ENCODE measurements at regions of chr14 and their contacts with region 1.

Region 1: DNA sequence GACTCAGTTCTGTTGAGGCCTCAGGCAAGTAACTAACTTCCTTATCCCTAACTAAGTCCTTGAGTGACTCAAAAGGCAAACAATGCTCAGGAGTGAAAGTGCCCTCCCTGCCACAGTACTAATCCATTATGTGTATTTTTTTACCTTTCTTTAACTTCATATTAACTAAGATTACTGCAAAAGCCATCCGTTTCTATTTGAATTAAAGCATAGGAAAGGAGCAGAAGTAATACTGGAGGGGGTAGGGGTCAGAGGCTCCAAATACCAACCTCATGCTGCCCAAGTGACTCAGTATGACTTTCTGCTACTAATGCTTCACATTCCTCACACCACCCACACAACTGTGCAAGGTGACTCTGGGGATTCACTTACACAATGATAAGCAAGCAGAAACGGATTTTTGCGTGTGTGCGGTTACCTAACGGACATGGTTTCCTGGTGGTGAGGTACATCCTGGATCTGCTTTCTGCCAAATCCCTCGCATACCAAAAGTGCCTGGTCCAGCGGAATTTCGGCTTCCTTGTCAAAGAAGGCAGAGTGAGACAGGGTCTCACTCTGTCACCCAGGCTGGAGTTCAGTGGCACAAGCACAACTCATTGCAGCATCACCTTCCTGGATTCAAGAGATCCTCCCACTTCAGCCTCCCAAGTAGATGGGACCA is 25.1 kb downstream of the MOK start:
- DNase-seq: peak; percentile 98
- H3K4me3 ChIP-seq: no peak overlapping the region
- H3K27ac ChIP-seq: peak overlapping the region; percentile 94
- H3K4me1 ChIP-seq: peaks cover 63% of the 10 kb centered on the region
- H3K27me3 ChIP-seq: no peaks in the 10 kb centered on the region
- CTCF ChIP-seq: no peak

Region 2: DNA sequence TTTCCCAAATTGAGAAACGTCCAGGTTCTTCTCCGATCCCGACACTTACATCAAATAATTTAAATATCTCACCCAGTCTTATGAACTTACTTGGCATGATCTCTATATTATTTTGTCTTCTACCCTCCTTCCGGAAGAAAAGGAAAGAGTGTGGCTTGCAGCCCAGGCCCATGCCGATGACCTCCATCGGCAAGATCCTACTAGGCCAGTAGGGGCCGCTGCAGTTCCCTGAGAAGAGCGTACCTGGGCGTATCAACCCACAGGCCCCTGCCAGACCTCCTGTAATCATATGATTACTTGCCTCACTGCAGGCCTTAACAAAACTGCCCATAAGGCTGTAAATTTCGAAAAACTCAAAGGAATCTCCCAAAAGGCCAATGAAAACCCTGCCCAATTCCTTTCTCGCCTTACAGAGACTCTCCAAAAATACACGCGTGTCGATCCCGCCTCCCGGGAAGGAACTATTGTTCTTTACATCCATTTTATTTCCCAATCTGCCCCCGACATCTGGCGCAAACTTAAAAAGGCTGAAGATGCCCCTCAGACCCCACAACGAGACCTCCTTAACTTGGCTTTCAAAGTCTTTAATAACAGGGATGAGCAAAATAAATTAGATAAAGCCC is 44.4 kb before region 1 on chr14:
- CTCF ChIA-PET with region 1: no interaction called
- dilution Hi-C with region 1: no loop called
- in situ Hi-C with region 1: no loop called
- intact Hi-C with region 1: loop called (anchors 5 kb)
- DNase-seq: peak; percentile 64
- H3K4me3 ChIP-seq: no peak overlapping the region
- H3K27ac ChIP-seq: no peak overlapping the region
- H3K4me1 ChIP-seq: peaks cover 9% of the 10 kb centered on the region
- H3K27me3 ChIP-seq: no peaks in the 10 kb centered on the region
- CTCF ChIP-seq: peak; percentile 69 to 93

Region 3: DNA sequence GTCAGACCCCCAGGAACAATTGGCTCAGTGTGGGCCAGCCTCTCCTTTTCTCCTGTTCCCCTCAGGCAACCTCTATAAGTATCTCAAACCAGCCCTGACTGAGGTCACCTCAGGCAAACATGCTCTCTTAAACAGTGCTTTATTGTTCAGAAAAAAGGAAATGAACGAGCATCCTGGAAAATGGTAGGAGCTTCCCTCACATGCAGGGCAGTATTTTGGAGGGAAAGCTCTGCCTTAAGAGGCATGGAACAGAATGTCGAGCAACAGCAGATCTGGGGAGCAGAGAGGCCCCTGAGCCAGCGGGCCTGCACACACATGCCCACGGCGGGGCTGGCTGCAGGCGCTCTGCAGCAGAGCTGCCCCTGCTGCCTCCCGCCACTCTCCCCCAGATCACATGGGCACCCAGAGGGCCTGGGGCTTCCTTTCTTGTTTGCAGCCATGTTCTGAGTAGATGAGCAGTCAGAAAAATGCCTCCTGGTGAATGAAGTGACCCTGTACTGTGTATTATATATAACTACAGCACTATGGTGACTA is 16.8 kb before region 1 on chr14:
- CTCF ChIA-PET with region 1: no interaction called
- dilution Hi-C with region 1: no loop called
- in situ Hi-C with region 1: no loop called
- intact Hi-C with region 1: loop called (anchors 2 kb)
- DNase-seq: peak; percentile 94
- H3K4me3 ChIP-seq: no peak overlapping the region
- H3K27ac ChIP-seq: peak overlapping the region; percentile 89
- H3K4me1 ChIP-seq: peaks cover 31% of the 10 kb centered on the region
- H3K27me3 ChIP-seq: no peaks in the 10 kb centered on the region
- CTCF ChIP-seq: no peak

Region 4: DNA sequence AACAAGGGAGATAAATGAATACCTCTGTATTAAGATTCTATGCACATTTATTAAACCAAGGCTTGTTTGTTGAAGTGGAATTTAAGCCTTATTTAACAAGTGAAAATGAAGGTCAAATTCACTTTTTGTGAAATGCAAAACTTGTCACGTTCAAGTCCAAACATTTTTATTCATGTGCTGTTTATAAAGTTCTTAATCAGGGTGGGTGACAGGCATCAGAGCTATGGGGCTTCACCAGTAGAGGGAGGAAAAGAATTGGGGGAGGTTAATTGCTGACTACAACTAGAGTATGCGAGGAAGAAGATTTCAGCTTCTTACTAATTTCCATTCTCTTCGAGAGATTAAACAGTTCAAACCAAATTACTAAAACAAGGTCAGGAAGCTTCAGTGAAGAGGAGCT is 15.5 kb after region 1 on chr14:
- CTCF ChIA-PET with region 1: no interaction called
- dilution Hi-C with region 1: no loop called
- in situ Hi-C with region 1: no loop called
- intact Hi-C with region 1: loop called (anchors 1 kb)
- DNase-seq: no peak
- H3K4me3 ChIP-seq: no peak overlapping the region
- H3K27ac ChIP-seq: no peak overlapping the region
- H3K4me1 ChIP-seq: peaks cover 4% of the 10 kb centered on the region
- H3K27me3 ChIP-seq: no peaks in the 10 kb centered on the region
- CTCF ChIP-seq: peak; percentile 17 to 18

Region 5: DNA sequence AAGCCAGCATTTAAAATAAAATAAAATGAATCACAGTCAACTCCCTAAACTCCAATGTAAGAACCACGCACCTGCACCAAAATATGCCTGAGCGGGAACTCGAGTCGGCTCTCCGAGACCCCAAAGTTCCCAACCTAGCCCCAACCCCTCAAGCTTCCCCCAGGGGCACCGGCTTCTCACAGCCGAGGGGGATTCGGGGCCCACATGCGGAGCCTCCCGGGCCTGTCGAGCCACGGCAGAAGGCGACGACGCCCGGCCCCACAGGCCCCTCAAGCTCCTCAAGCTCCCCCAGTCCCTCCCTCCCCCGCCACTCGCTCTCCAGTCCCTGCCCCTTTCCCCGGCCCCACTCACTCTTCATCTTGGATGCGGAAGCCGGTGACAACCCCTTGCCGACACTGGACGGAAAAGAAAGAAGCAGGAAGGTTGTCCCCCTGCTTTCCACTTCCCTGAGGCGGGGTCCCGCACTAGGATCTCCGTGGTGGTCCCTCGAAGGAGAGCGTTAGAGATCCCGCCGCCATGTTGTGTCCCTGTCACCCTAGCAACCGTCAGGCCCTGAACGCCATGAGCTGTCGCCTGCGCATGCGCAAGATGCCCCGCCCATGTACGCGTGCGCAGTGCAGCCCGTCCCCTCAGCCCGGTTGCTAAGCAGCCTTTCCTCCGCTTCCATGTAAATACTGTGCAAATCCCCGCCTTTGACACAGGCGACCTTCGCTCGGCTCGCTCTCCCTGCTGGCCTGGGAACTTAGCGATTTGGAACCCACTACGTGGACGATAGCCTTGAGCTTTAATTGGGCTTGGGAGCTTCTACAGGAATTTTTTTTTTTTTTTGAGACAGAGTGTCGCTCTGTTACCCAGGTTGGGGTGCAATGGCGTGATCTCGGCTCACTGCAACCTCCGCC is 25.0 kb after region 1 on chr14 and contains the start of gene MOK:
- CTCF ChIA-PET with region 1: no interaction called
- dilution Hi-C with region 1: no loop called
- in situ Hi-C with region 1: no loop called
- intact Hi-C with region 1: loop called (anchors 1 kb)
- DNase-seq: peak; percentile 94
- H3K4me3 ChIP-seq: peak within 1 kb of the TSS; percentile 68 to 82 (median 77)
- H3K27ac ChIP-seq: peak within 1 kb of the TSS; percentile 86
- H3K4me1 ChIP-seq: no peaks in the 10 kb centered on the region
- H3K27me3 ChIP-seq: no peaks in the 10 kb centered on the region
- CTCF ChIP-seq: no peak
- total RNA-seq, gene MOK: 41.6 to 49.0 TPM

Measured in mammary epithelial cell (primary cell).